Ascending aorta (tissue), 2 donors: ENCODE measurements at regions of chr16 and their contacts with region 1.

Region 1: DNA sequence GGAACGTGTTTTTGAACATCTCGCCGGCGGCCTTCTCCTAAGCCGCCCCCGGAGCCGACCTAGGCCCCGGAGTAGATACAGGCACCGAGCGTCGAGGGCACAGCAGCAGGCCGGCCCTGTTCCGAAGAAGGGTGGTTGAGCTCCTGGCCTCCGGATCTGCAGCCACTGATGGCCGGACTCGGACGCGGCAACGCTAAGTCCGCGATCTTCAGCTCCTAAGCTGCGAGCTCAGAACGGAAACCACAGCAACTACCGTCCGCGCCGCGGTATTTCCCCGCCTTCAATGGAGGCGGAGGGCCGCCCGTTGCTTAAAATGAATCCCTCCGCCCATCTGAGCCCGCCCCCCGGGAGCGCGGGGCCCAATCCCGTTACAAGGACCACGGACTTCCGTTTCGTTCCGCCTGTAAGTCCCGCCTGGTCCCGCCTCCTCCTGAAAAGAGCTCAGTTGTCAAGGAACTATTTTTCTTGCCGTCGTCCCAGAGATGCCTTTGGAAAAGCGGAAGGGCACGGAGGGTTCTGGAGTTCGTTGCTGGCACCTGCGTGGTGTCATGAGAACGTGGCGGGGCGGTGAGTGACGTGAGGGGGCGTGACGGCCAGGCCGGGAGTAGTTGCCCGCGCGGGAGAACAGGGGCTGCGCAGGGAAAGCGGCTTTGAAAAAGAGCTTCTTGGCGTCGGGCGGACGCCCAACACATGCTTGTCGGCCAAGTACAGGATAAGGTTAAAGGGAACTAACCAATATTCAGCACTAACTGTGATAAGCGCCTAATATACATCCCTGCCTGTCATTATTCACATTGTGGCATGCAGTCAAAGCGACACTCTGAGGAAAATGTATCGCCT is at the start of gene CFAP20:
- DNase-seq: peak; percentile 94 to 100
- H3K4me3 ChIP-seq: peak within 1 kb of the TSS; percentile 93 to 99
- H3K27ac ChIP-seq: peak within 1 kb of the TSS; percentile 84 to 91
- H3K4me1 ChIP-seq: peaks cover 17 to 33% of the 10 kb centered on the region in 2 donors
- H3K27me3 ChIP-seq: no peaks in the 10 kb centered on the region
- CTCF ChIP-seq: no peak
- total RNA-seq, gene CFAP20: 39.1 TPM

Region 2: GRCh38 chr16:57535680-57536305 is 593.5 kb before region 1 on chr16:
- intact Hi-C with region 1: loop called (anchors 5 kb)
- DNase-seq: peak; percentile 74 to 97
- H3K4me3 ChIP-seq: peak overlapping the region; percentile 92 to 93
- H3K27ac ChIP-seq: peak overlapping the region; percentile 89 to 90
- H3K4me1 ChIP-seq: peaks cover 19 to 24% of the 10 kb centered on the region in 2 donors
- H3K27me3 ChIP-seq: no peaks in the 10 kb centered on the region
- CTCF ChIP-seq: peak in 2 of 3 experiments; percentile 21 to 27

Region 3: GRCh38 chr16:57899771-57900661 is 229.3 kb before region 1 on chr16:
- intact Hi-C with region 1: loop called (anchors 5 kb)
- DNase-seq: peak in 1 of 2 donors; percentile 82
- H3K4me3 ChIP-seq: no peak overlapping the region
- H3K27ac ChIP-seq: no peak overlapping the region
- H3K4me1 ChIP-seq: no peaks in the 10 kb centered on the region
- H3K27me3 ChIP-seq: no peaks in the 10 kb centered on the region
- CTCF ChIP-seq: peak; percentile 50 to 77 (median 75)

Region 4: DNA sequence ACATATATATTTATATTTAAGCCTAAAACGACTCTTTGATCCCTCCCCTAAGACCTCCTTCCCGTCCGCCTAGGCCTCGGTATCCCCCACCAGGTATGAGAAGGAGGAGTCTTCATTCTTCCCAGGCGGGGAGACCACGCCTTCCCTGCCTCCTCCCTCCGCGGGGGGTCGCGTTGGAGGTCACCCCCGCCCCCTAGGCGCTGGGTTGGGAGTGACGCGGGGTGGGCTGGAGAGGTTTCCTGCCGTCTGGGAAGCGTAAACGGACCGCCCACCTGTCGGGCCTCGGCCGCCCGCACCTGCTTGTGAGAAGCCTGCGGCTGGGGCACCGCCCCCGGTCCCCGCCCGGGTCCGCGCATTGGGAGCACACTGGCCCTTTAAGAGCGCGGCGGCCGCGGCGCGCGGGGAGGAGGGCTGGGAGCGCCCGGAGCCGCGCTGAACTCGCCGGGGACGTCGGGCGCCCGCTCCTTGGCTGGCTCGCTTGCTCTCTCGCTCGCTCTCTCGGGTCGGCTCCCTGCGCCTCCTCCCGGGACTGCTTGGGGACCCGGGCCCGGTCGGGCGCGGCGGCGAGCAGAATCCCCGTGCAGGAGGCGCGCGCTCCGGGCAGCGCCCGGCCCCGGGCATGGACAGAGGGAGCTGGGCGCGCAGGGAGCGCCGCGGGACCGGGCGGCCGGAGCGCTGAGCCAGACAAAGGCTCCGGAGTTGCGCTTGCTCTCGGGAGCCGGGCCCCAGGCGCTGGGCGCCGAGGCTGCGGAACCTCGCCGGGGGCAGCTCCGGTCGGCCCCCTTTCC is 103.8 kb before region 1 on chr16 and contains the start of gene MMP15:
- intact Hi-C with region 1: loop called (anchors 2 kb)
- DNase-seq: peak in 1 of 2 donors; percentile 78
- H3K4me3 ChIP-seq: peak within 1 kb of the TSS; percentile 74 to 82
- H3K27ac ChIP-seq: peak within 1 kb of the TSS; percentile 73 to 74
- H3K4me1 ChIP-seq: peaks cover 7 to 18% of the 10 kb centered on the region in 2 donors
- H3K27me3 ChIP-seq: no peaks in the 10 kb centered on the region
- CTCF ChIP-seq: no peak
- total RNA-seq, gene MMP15: 14.9 TPM

Region 5: DNA sequence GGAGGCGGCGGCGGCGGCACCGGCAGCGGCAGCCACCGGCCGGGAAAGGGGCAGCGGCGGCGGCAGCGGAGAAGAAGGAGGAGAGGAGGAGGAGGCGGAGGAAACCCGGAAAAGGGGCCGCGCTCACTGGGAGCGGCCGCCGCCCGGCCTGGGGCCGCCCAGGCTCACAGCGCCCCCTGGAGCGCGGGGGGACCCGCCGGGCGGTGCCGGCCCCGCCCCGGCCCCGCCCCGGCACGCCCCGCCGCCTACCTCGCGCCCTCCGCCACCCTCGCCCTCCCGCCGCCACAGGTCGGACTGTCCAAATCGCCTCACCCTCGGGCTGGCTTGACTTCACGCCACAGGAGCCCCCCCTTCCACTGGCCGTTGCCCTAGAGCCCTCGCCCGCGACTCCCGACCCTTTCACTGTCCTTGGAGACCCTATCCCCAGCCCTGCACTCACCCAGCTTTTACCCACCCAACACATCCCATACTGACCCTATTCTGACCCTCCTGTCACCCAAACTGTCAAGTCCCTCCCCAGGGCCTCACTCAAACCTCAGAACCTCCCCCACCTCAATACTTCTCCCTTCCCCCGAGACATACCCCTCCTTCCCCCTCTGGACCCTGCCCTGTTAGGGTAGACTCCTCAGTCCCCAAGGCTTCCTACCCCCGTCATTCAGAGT is 68.8 kb after region 1 on chr16 and contains the start of gene CSNK2A2:
- intact Hi-C with region 1: loop called (anchors 5 kb)
- DNase-seq: peak in 1 of 2 donors; percentile 73
- H3K4me3 ChIP-seq: peak within 1 kb of the TSS; percentile 61 to 93
- H3K27ac ChIP-seq: peak within 1 kb of the TSS in 1 of 2 donors; percentile 15
- H3K4me1 ChIP-seq: peaks cover 6% of the 10 kb centered on the region in 2 donors
- H3K27me3 ChIP-seq: no peaks in the 10 kb centered on the region
- CTCF ChIP-seq: peak in 2 of 3 experiments; percentile 5 to 36
- total RNA-seq, gene CSNK2A2: 14.5 TPM

Region 6: GRCh38 chr16:58249780-58250478 is 120.6 kb after region 1 on chr16:
- intact Hi-C with region 1: loop called (anchors 2 kb)
- DNase-seq: peak; percentile 16 to 86
- H3K4me3 ChIP-seq: peak overlapping the region; percentile 77 to 78
- H3K27ac ChIP-seq: peak overlapping the region; percentile 52 to 73
- H3K4me1 ChIP-seq: peaks cover 3 to 9% of the 10 kb centered on the region in 2 donors
- H3K27me3 ChIP-seq: no peaks in the 10 kb centered on the region
- CTCF ChIP-seq: no peak